ENCODE measurements at regions of chr1 and their contacts with region 1.

Region 1: GRCh38 chr1:91803847-91804545 is 82.0 kb downstream of the TGFBR3 start:
- DNase-seq: peak; percentile 70
- H3K4me3 Mint-ChIP-seq: peak overlapping the region; percentile 72
- H3K27ac Mint-ChIP-seq: peak overlapping the region; percentile 93
- H3K4me1 Mint-ChIP-seq: peaks cover 68% of the 10 kb centered on the region
- H3K27me3 Mint-ChIP-seq: peaks cover 6% of the 10 kb centered on the region

Region 2: GRCh38 chr1:91021686-91022517 is 782.1 kb before region 1 on chr1 and contains the start of gene ZNF644:
- intact Hi-C with region 1: loop called (anchors 10 kb)
- DNase-seq: peak; percentile 87
- H3K4me3 Mint-ChIP-seq: peak within 1 kb of the TSS; percentile 92
- H3K27ac Mint-ChIP-seq: peak within 1 kb of the TSS; percentile 99
- H3K4me1 Mint-ChIP-seq: peaks cover 48% of the 10 kb centered on the region
- H3K27me3 Mint-ChIP-seq: peaks cover 2% of the 10 kb centered on the region
- total RNA-seq, gene ZNF644: 60.4 and 68.7 TPM in 2 replicates

Region 3: GRCh38 chr1:91523482-91523881 is 280.5 kb before region 1 on chr1:
- intact Hi-C with region 1: loop called (anchors 1 kb)
- DNase-seq: no peak
- H3K4me3 Mint-ChIP-seq: no peak overlapping the region
- H3K27ac Mint-ChIP-seq: peak overlapping the region; percentile 33
- H3K4me1 Mint-ChIP-seq: peaks cover 41% of the 10 kb centered on the region
- H3K27me3 Mint-ChIP-seq: no peaks in the 10 kb centered on the region

Region 4: GRCh38 chr1:91697416-91697815 is 106.6 kb before region 1 on chr1:
- intact Hi-C with region 1: loop called (anchors 1 kb)
- DNase-seq: peak; percentile 69
- H3K4me3 Mint-ChIP-seq: peak overlapping the region; percentile 72
- H3K27ac Mint-ChIP-seq: peak overlapping the region; percentile 86
- H3K4me1 Mint-ChIP-seq: peaks cover 41% of the 10 kb centered on the region
- H3K27me3 Mint-ChIP-seq: peaks cover 1% of the 10 kb centered on the region

Region 5: DNA sequence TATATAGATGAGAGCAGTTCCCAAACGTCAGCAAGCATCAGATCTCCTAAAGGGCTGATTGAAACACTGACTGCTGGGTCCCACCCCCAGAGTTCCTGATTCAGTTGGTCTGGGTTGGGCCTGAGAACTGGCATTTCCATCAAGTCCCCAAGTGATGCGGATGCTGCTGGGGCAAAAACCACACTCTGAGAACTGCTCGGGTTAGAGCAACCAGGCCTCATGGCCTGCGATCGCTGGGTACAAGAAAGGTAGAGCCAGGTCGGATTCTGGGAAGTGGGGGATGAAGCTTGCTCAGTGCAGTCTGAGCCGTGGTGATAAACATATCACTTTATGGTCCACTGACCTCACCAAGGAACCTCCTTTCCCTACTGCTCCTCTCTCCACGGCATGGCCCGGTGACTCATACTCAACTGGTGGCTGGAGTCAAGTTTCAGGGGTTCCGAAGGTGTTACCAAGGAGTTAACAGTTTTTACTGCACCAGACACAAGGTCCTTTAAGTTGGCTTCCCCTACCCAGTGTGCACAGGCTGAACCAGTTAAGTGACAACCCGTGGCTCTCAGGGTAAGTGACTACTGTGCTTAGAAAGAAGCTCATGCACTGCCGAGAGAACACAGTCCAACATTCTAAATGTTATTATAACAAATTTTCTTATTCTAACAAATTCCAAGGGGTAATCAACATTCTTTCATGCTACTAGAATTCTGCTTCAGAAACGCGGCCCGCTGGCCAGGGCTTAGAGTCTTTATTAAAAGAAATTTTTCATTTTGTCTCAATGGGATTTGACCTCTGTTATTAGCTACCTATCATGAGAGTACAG is 71.5 kb before region 1 on chr1:
- intact Hi-C with region 1: loop called (anchors 1 kb)
- DNase-seq: no peak
- H3K4me3 Mint-ChIP-seq: no peak overlapping the region
- H3K27ac Mint-ChIP-seq: peak overlapping the region; percentile 37
- H3K4me1 Mint-ChIP-seq: peaks cover 51% of the 10 kb centered on the region
- H3K27me3 Mint-ChIP-seq: peaks cover 8% of the 10 kb centered on the region

Region 6: GRCh38 chr1:91885716-91886506 is 81.9 kb after region 1 on chr1 and contains the start of gene TGFBR3:
- intact Hi-C with region 1: loop called (anchors 1 kb)
- DNase-seq: peak; percentile 56
- H3K4me3 Mint-ChIP-seq: peak within 1 kb of the TSS; percentile 98
- H3K27ac Mint-ChIP-seq: peak within 1 kb of the TSS; percentile 84
- H3K4me1 Mint-ChIP-seq: peaks cover 28% of the 10 kb centered on the region
- H3K27me3 Mint-ChIP-seq: peaks cover 19% of the 10 kb centered on the region
- total RNA-seq, gene TGFBR3: 8.9 and 11.8 TPM in 2 replicates

Region 7: DNA sequence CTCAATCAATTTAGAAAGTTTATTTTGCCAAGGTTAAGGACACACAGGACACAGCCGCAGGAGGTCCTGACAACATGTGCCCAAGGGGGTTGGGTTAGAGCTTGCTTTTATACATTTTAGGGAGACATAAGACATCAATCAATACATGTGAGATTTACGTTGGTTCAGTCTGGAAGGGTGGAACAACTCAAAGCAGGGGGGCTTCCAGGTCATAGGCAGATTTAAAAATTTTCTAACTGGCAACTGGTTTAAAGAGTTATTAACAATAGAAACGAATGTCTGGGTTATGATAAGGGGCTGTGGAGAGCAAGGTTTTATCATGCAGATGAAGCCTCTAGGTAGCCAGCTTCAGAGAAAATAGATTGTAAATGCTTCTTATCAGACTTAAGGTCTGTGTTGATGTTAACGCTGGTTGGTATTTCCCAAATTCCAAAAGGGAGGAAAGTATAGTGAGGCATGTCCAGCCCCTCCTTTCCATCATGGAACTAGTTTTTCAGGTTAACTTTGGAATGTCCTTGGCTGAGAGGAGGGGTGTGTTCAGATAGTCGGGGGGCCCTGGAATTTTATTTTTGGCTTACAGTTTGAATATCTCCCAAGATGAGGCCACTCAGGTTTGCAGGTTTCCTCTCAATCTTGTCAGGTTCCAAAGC is 112.9 kb after region 1 on chr1:
- intact Hi-C with region 1: no loop called
- DNase-seq: no peak
- H3K4me3 Mint-ChIP-seq: no peak overlapping the region
- H3K27ac Mint-ChIP-seq: no peak overlapping the region
- H3K4me1 Mint-ChIP-seq: no peaks in the 10 kb centered on the region
- H3K27me3 Mint-ChIP-seq: peaks cover 12% of the 10 kb centered on the region

Region 8: DNA sequence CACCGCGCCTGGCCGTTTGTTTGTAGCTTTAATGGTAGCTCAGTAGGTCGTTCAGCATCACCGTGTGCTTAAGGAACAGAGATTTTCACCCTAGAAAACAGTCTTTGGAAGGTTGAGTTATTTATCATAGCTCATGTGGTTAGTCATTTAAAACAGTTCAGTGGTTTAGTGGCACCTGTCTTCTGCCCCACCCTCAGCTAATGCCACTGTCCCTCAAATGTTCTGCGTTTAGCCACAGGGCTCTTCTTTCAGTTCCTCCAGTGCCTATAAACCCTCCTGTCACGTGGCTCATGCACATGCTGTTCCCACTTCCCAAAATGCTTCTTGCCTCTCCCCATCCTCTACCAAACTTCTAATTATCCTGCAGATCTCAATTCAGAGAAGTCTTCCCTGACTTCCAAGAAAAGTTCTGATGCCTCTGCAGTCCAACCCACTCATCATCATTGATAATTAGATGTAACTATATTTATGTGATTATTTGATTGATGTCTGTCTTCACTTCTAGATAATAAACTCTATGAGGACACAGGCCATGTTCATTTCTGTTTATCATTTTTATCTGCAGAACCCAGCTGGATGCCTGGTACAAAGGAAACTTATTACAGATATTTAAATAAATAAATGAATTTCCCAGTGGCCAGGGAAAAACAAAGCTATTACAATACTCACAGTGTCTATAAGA is 1171.7 kb after region 1 on chr1:
- intact Hi-C with region 1: loop called (anchors 10 kb)
- DNase-seq: no peak
- H3K4me3 Mint-ChIP-seq: peak overlapping the region; percentile 3
- H3K27ac Mint-ChIP-seq: peak overlapping the region; percentile 70
- H3K4me1 Mint-ChIP-seq: peaks cover 80% of the 10 kb centered on the region
- H3K27me3 Mint-ChIP-seq: no peaks in the 10 kb centered on the region